ENCODE measurements at regions of chr3 and their contacts with region 1.

Region 1: DNA sequence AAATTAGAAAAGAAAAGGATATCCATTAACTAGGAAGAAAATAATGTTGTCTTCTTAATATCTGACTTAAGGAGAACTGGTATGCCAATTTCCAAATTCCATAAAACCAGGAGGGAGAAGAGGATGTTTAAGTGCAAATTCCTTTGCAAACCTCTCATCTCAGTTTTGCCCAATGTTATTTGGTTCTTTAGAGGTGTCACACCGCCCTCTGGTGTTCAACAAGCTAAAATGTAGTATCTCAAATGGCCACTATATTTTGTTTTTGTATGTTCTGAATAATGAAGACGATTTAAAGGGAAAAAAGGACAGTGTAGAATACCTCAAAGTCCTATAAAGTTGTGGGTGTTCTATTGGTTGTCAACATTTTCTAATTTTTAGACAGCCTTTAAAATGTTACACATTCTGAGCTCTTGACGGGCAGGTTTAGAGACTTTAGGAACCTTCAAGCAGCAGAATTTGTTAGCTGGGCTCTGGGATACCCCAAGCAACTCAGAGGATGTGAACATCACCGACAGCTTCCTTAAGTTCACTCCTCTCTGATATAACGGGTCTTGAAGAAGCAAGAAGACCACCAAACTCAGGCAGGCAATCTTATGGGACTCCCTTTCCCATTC is 458.3 kb downstream of the MFSD1 start:
- DNase-seq: peak; percentile 77
- H3K4me3 Mint-ChIP-seq: no peak overlapping the region
- H3K27ac Mint-ChIP-seq: no peak overlapping the region
- H3K4me1 Mint-ChIP-seq: no peaks in the 10 kb centered on the region
- H3K27me3 Mint-ChIP-seq: peaks cover 49% of the 10 kb centered on the region
- CTCF ChIP-seq: peak; percentile 81

Region 2: DNA sequence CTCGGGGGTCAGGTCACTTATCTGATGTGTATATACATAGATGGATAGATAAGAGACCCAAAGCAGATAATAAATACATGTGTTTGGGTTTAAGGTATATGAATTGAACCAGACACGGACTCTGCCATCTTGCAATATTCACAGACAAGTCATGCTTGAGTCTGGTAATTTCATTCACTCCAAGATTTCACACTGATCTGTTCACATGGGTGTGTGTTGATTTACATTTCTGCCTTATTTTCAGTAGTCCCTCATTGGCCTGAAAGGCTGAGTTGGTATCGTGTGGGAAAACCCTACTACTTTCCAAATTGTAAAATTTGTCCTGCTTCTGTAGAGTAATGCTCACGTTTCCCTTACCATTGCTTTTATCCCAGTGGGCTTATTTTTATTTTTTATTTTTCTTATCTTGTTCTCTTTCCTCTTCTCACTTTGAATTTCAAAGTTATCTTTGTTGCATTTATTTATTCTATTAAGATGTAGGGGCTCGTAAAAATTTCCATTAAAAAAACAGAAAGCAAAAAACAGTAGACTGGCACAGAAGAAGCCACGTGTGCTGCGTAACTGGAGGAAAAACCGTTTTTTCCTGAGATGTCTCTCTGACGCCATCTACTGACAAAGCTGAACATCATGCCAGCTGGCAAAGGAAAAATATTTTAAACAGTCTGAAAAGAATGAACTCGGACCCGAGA is 469.1 kb before region 1 on chr3:
- CTCF ChIA-PET with region 1: interaction called, 13 read pairs
- POLR2A ChIA-PET with region 1: no interaction called
- intact Hi-C with region 1: loop called (anchors 1 kb)
- DNase-seq: peak; percentile 71
- H3K4me3 Mint-ChIP-seq: peak overlapping the region; percentile 63
- H3K27ac Mint-ChIP-seq: no peak overlapping the region
- H3K4me1 Mint-ChIP-seq: peaks cover 20% of the 10 kb centered on the region
- H3K27me3 Mint-ChIP-seq: no peaks in the 10 kb centered on the region
- CTCF ChIP-seq: peak; percentile 79

Region 3: GRCh38 chr3:158918008-158918407 is 342.1 kb before region 1 on chr3:
- CTCF ChIA-PET with region 1: interaction called, 43 read pairs
- POLR2A ChIA-PET with region 1: no interaction called
- intact Hi-C with region 1: loop called (anchors 1 kb)
- DNase-seq: peak; percentile 70
- H3K4me3 Mint-ChIP-seq: no peak overlapping the region
- H3K27ac Mint-ChIP-seq: no peak overlapping the region
- H3K4me1 Mint-ChIP-seq: no peaks in the 10 kb centered on the region
- H3K27me3 Mint-ChIP-seq: peaks cover 31% of the 10 kb centered on the region
- CTCF ChIP-seq: peak; percentile 72

Region 4: DNA sequence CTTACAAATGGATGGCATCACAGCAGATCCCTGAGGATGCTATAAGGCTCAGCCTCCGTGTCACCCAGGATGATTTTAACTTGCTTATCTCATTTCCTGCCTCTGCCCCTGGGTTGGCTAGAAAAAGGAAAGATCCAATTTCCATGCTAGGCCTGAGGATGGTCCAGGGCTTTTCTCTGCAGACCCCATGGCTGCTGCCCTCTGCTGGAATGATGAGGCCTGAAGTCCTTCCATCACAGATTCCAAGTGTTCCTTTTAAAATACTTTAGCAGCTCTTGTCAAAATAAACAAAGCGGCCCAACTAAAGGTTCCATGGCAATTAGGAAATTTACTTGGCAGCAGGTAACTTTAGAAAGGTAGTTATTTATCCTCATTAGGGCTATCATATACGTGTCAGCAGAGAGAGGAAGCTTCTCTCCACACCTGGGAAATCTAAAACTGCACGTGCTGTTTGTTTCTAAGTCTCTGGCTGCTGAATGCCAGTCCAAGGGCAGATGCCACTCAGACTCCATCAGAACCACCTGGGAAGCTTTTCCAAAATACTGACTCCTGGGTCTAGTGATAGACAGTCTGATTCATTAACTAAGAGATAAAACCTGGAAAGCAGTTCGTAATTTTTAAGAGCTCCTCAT is 326.5 kb after region 1 on chr3:
- CTCF ChIA-PET with region 1: interaction called, 5 read pairs
- POLR2A ChIA-PET with region 1: no interaction called
- intact Hi-C with region 1: loop called (anchors 1 kb)
- DNase-seq: peak; percentile 46
- H3K4me3 Mint-ChIP-seq: no peak overlapping the region
- H3K27ac Mint-ChIP-seq: no peak overlapping the region
- H3K4me1 Mint-ChIP-seq: no peaks in the 10 kb centered on the region
- H3K27me3 Mint-ChIP-seq: peaks cover 16% of the 10 kb centered on the region
- CTCF ChIP-seq: peak; percentile 32

Region 5: DNA sequence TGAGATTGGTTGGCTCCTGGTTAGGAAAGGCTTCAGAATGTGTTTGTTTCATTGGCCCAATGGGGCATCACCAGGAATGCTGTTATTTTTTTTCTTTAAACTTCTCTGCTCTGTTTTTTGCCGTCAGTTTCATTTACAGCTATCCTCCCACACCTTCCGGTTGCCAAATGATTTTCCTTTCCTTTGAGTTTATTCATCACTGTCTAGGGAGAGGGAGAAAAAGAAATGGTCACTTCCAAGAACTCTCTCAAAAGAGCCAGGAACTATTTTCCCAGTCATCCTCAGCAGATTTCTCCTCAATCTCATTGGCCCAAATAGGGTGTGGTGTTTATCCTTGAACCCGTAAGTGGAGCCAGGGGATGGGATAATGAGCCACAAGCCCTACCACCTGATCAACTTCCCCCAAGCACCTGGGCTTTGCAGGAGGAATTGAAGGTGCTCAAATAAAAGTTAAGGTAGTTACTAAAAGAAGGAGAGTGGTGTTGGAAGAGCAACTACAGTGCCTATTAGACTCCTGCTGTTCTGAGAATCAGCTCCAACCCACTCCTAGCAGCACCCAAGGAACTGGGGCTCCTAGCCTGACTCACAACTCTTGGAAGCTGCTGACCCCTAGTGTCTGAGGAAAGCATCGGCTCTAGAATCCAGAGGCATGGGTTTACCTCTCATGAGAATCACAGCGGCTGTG is 544.7 kb after region 1 on chr3:
- CTCF ChIA-PET with region 1: interaction called, 62 read pairs
- POLR2A ChIA-PET with region 1: no interaction called
- intact Hi-C with region 1: loop called (anchors 1 kb)
- DNase-seq: peak; percentile 93
- H3K4me3 Mint-ChIP-seq: no peak overlapping the region
- H3K27ac Mint-ChIP-seq: no peak overlapping the region
- H3K4me1 Mint-ChIP-seq: peaks cover 32% of the 10 kb centered on the region
- H3K27me3 Mint-ChIP-seq: no peaks in the 10 kb centered on the region
- CTCF ChIP-seq: peak; percentile 91

Region 6: DNA sequence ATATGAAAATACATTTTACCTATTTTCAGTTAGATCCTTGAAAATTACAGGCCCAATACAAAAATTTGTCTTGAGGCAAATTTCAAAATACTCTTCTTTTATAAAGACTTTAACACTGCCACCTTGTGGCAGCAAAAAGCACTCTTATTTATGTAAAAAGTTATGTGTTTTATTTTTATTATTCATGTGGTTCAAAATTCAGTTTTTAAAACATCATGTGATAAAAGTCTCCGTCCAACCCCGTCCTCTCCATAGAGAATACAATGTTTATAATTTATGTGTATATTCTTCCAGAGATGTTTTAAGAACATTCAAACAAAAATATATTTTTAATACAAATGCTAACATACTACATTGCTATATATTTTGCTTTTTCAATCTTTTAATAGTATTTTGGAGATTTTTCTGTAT is 1226.3 kb after region 1 on chr3:
- CTCF ChIA-PET with region 1: interaction called, 4 read pairs
- POLR2A ChIA-PET with region 1: no interaction called
- intact Hi-C with region 1: loop called (anchors 10 kb)
- DNase-seq: peak; percentile 53
- H3K4me3 Mint-ChIP-seq: no peak overlapping the region
- H3K27ac Mint-ChIP-seq: no peak overlapping the region
- H3K4me1 Mint-ChIP-seq: no peaks in the 10 kb centered on the region
- H3K27me3 Mint-ChIP-seq: no peaks in the 10 kb centered on the region
- CTCF ChIP-seq: peak; percentile 61